ENCODE measurements at regions of chr9 and their contacts with region 1.

Region 1: DNA sequence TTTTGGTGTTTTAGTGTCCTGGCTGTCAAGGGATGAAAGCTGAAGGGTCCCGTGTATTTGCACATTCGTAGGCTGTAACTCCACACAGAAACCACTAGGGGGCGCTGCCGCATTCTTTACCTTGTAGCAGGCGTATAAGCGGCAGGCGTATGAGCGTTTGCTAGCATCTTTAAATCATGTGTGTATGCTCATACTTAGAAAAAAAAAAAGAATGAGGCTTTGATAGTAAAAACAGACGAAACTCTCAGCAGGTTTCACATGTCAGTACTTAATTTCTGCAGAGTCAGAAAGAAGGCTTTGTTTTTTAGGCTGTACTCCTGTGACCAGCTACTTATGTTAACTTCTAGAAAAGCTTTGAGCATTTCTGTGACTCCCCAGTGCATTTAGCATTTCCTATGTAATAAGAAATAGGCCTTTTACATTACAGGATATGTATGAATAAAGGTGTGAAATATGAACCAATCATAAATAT is 218.8 kb upstream of the ADAMTSL1 start:
- DNase-seq: peak; percentile 50 to 72
- ATAC-seq: peak; percentile 84 to 93
- H3K4me3 ChIP-seq: no peak overlapping the region
- H3K27ac ChIP-seq: no peak overlapping the region
- H3K4me1 ChIP-seq: no peaks in the 10 kb centered on the region
- CTCF ChIP-seq: peak; percentile 94
- EP300 ChIP-seq: no peak
- POLR2A ChIP-seq: no peak
- RAD21 ChIP-seq: peak; percentile 87 to 89

Region 2: GRCh38 chr9:17962747-17963146 is 292.4 kb before region 1 on chr9:
- CTCF ChIA-PET with region 1: no interaction called
- POLR2A ChIA-PET with region 1: no interaction called
- DNase-seq: no peak
- ATAC-seq: no peak
- H3K4me3 ChIP-seq: no peak overlapping the region
- H3K27ac ChIP-seq: no peak overlapping the region
- H3K4me1 ChIP-seq: no peaks in the 10 kb centered on the region
- CTCF ChIP-seq: no peak
- EP300 ChIP-seq: no peak
- POLR2A ChIP-seq: no peak
- RAD21 ChIP-seq: no peak

Region 3: GRCh38 chr9:18215626-18216025 is 39.6 kb before region 1 on chr9:
- CTCF ChIA-PET with region 1: no interaction called
- POLR2A ChIA-PET with region 1: no interaction called
- DNase-seq: no peak
- ATAC-seq: no peak
- H3K4me3 ChIP-seq: no peak overlapping the region
- H3K27ac ChIP-seq: no peak overlapping the region
- H3K4me1 ChIP-seq: no peaks in the 10 kb centered on the region
- CTCF ChIP-seq: no peak
- EP300 ChIP-seq: no peak
- POLR2A ChIP-seq: no peak
- RAD21 ChIP-seq: no peak

Region 4: DNA sequence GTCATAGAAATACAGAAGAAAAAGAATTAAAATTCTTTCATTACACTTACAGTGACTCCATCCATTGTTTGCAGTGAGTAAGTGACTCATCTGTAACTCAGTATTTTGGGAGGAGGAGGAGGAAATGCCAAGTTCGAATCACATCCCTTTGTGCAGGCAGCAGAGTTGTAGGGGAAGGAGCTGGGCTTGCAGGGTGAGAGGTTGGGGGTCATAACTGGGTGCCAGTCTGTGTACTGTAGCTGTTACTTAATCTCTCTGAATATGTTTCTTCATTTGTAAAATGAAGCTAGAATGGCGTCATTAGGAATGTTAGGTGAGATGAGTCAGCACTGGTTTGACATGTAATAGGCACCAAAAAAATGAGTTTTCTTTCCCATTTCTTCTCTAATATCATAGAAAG is 16.9 kb before region 1 on chr9:
- CTCF ChIA-PET with region 1: interaction called, 14 read pairs
- POLR2A ChIA-PET with region 1: no interaction called
- DNase-seq: peak in 1 of 2 experiments; percentile 27
- ATAC-seq: peak; percentile 64 to 94; a peak in 5 of 6 replicates
- H3K4me3 ChIP-seq: no peak overlapping the region
- H3K27ac ChIP-seq: no peak overlapping the region
- H3K4me1 ChIP-seq: peaks cover 13% of the 10 kb centered on the region; the same call in 2 of the 3 replicates
- CTCF ChIP-seq: no peak
- EP300 ChIP-seq: no peak
- POLR2A ChIP-seq: no peak
- RAD21 ChIP-seq: no peak

Region 5: GRCh38 chr9:18362901-18363685 is 107.9 kb after region 1 on chr9:
- CTCF ChIA-PET with region 1: no interaction called
- POLR2A ChIA-PET with region 1: no interaction called
- DNase-seq: no peak
- ATAC-seq: no peak
- H3K4me3 ChIP-seq: no peak overlapping the region
- H3K27ac ChIP-seq: no peak overlapping the region
- H3K4me1 ChIP-seq: no peaks in the 10 kb centered on the region
- CTCF ChIP-seq: no peak
- EP300 ChIP-seq: no peak
- POLR2A ChIP-seq: no peak
- RAD21 ChIP-seq: no peak

Region 6: DNA sequence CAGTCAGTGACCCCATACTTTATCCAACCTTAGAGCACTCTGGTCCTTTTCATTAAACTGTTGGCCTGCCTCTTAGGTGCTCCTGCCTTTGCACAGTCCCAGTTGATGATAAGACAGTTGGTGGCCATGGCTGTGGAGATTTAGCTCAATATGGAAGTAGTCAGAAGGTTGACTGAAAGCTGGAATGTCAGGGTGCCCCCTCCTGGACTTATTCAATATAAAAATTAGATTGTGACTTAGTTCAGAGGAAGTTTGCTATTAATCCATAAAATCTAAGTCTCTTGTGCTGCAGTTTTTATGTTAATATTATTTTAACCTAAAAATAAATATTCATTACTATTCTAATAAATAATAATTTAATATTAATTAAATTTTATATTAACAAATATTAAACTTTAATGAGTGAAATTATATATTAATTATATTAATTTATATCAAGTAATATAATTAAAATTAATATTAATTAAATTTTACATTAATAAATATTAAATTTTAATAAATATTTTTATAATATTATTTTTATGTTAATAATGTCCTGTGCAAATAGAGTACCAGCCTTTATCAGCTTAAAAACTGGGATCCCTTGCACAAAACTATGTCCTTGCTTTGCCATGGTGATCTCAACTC is 141.0 kb after region 1 on chr9:
- CTCF ChIA-PET with region 1: interaction called, 11 read pairs
- POLR2A ChIA-PET with region 1: no interaction called
- DNase-seq: peak in 1 of 2 experiments; percentile 24
- ATAC-seq: peak in 1 of 2 experiments; percentile 28; a peak in 1 of 6 replicates
- H3K4me3 ChIP-seq: no peak overlapping the region
- H3K27ac ChIP-seq: no peak overlapping the region
- H3K4me1 ChIP-seq: peaks cover 21% of the 10 kb centered on the region; the same call in 2 of the 3 replicates
- CTCF ChIP-seq: no peak; the same call in 2 of the 3 replicates
- EP300 ChIP-seq: no peak
- POLR2A ChIP-seq: no peak
- RAD21 ChIP-seq: peak; percentile 23 to 47; a peak in 3 of 5 replicates

Region 7: GRCh38 chr9:18429070-18429469 is 173.9 kb after region 1 on chr9:
- CTCF ChIA-PET with region 1: interaction called, 13 read pairs
- POLR2A ChIA-PET with region 1: no interaction called
- DNase-seq: no peak
- ATAC-seq: no peak
- H3K4me3 ChIP-seq: no peak overlapping the region
- H3K27ac ChIP-seq: no peak overlapping the region
- H3K4me1 ChIP-seq: no peaks in the 10 kb centered on the region
- CTCF ChIP-seq: no peak
- EP300 ChIP-seq: no peak
- POLR2A ChIP-seq: no peak
- RAD21 ChIP-seq: no peak